ENCODE measurements at regions of chr15 and their contacts with region 1.

Region 1: GRCh38 chr15:85485956-85486567 is 105.7 kb downstream of the AKAP13 start:
- DNase-seq: no peak
- H3K4me3 ChIP-seq: no peak overlapping the region
- H3K27me3 ChIP-seq: no peaks in the 10 kb centered on the region
- CTCF ChIP-seq: peak; percentile 75

Region 2: DNA sequence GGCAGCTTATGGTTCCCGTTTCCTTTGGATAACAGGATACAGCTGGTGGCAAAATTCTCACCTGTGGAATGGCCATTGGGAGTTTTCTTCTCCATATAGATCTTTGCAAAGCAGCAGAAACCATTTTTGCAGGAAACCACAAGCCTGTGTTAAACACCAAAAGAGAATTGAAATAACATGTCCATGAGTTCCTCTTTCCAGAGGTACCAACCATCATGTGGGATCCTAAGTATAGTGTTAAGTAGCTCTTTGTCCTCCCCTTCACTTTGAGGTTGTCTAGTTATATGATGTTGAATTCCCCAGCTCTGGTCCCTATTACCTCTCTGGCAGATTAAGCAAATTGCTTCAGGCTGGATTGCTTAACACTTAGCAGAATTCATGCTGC is 10.8 kb before region 1 on chr15:
- CTCF ChIA-PET with region 1: interaction called, 11 read pairs
- POLR2A ChIA-PET with region 1: no interaction called
- DNase-seq: no peak
- H3K4me3 ChIP-seq: no peak overlapping the region
- H3K27me3 ChIP-seq: no peaks in the 10 kb centered on the region
- CTCF ChIP-seq: no peak

Region 3: GRCh38 chr15:85504749-85505676 is 19.0 kb after region 1 on chr15:
- CTCF ChIA-PET with region 1: interaction called, 25 read pairs
- POLR2A ChIA-PET with region 1: no interaction called
- DNase-seq: no peak
- H3K4me3 ChIP-seq: no peak overlapping the region
- H3K27me3 ChIP-seq: no peaks in the 10 kb centered on the region
- CTCF ChIP-seq: peak; percentile 66

Region 4: GRCh38 chr15:85539491-85539890 is 53.4 kb after region 1 on chr15:
- CTCF ChIA-PET with region 1: no interaction called
- POLR2A ChIA-PET with region 1: no interaction called
- DNase-seq: no peak
- H3K4me3 ChIP-seq: no peak overlapping the region
- H3K27me3 ChIP-seq: no peaks in the 10 kb centered on the region
- CTCF ChIP-seq: no peak